Sciatic nerve (tissue), 2 donors: ENCODE measurements at regions of chr12 and their contacts with region 1.

Region 1: GRCh38 chr12:1791104-1791841 is 29.1 kb upstream of the LRTM2 start:
- DNase-seq: peak; percentile 78
- ATAC-seq: peak; percentile 53

Region 2: DNA sequence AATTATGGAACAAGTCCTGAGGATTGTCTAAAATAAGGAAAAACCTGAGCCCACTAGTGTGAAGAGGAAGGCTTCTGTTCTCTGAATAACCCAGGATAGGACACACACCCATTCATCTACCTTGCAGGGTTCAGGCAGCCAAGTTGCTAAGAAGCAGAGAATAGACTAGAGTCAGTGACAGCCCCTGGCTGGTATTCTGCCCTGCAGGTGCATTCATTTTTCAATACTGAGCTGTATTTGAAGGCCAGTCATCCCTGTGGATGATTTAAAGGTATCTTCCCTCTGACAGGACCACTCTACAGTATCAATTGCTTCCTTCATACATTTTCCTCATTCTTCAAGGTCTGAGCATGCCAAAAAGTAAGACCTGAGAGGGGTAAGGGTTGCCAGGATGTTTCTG is 139.3 kb before region 1 on chr12:
- intact Hi-C with region 1: loop called (anchors 2 kb)
- DNase-seq: no peak
- ATAC-seq: no peak